ENCODE measurements at regions of chr2 and their contacts with region 1.

Region 1: DNA sequence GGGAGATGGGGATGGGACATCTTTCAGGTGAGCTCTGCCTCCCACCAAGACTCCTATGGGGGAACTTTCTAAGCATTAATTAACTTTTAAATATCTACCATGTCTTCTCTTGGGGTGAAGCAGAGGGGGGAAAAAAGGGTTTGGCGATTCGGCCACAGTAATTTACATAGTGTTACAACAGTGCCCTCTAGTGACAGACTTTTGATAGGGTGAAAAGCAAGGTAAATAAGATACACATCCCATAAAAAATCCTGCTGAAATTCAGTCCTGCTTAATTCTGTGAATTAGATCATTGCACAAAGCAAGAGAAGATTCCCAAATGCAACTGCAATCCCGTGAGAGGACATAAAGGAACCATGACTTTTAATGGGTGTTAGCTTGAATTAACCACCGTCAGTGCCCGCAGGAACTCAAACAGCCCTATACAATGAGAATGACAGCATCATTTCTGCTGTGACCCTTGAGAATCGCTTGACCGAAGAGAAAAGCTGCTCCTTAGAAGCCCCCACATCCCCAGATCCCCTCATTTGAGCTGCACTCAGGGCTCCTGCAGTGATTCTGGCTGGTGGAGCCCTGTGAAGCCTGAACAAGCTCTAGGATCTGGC is 32.8 kb downstream of the FAM124B start:
- DNase-seq: peak in 1 of 2 donors; percentile 65
- ATAC-seq: peak; percentile 63 to 70 (median 65)
- H3K4me3 ChIP-seq: no peak overlapping the region
- H3K4me3 Mint-ChIP-seq: no peak overlapping the region
- H3K27ac ChIP-seq: no peak overlapping the region
- H3K27ac Mint-ChIP-seq: no peak overlapping the region
- H3K4me1 ChIP-seq: no peaks in the 10 kb centered on the region
- H3K4me1 Mint-ChIP-seq: no peaks in the 10 kb centered on the region
- H3K27me3 ChIP-seq: no peaks in the 10 kb centered on the region
- H3K27me3 Mint-ChIP-seq: peaks cover 0 to 7% of the 10 kb centered on the region in 2 donors
- CTCF ChIP-seq: peak; percentile 69

Region 2: GRCh38 chr2:223970343-223971128 is 398.6 kb before region 1 on chr2:
- intact Hi-C with region 1: loop called (anchors 5 kb)
- DNase-seq: peak in 1 of 2 donors; percentile 82
- ATAC-seq: peak; percentile 73 to 79 (median 78)
- H3K4me3 ChIP-seq: no peak overlapping the region
- H3K4me3 Mint-ChIP-seq: no peak overlapping the region
- H3K27ac ChIP-seq: no peak overlapping the region
- H3K27ac Mint-ChIP-seq: peak overlapping the region in 1 of 2 donors; percentile 22
- H3K4me1 ChIP-seq: no peaks in the 10 kb centered on the region
- H3K4me1 Mint-ChIP-seq: peaks cover 9 to 11% of the 10 kb centered on the region in 2 donors
- H3K27me3 ChIP-seq: no peaks in the 10 kb centered on the region
- H3K27me3 Mint-ChIP-seq: no peaks in the 10 kb centered on the region
- CTCF ChIP-seq: peak; percentile 97

Measured in natural killer cell (primary cell).